Heart right ventricle (tissue), 16 donors: ENCODE measurements at regions of chr12 and their contacts with region 1.

Region 1: GRCh38 chr12:108803428-108804105 is 53.8 kb downstream of the SSH1 start:
- DNase-seq: peak in 1 of 2 donors; percentile 91
- ATAC-seq: peak; percentile 53 to 86 (median 76)
- H3K4me3 ChIP-seq: peak overlapping the region in 3 of 10 donors; percentile 23 to 37 (median 24)
- H3K27ac ChIP-seq: peak overlapping the region; percentile 79 to 91 (median 87)
- H3K4me1 ChIP-seq: peaks cover 20 to 85% (median 61%) of the 10 kb centered on the region in 9 donors
- H3K27me3 ChIP-seq: no peaks in the 10 kb centered on the region
- CTCF ChIP-seq: peak; percentile 92 to 98 (median 96)

Region 2: DNA sequence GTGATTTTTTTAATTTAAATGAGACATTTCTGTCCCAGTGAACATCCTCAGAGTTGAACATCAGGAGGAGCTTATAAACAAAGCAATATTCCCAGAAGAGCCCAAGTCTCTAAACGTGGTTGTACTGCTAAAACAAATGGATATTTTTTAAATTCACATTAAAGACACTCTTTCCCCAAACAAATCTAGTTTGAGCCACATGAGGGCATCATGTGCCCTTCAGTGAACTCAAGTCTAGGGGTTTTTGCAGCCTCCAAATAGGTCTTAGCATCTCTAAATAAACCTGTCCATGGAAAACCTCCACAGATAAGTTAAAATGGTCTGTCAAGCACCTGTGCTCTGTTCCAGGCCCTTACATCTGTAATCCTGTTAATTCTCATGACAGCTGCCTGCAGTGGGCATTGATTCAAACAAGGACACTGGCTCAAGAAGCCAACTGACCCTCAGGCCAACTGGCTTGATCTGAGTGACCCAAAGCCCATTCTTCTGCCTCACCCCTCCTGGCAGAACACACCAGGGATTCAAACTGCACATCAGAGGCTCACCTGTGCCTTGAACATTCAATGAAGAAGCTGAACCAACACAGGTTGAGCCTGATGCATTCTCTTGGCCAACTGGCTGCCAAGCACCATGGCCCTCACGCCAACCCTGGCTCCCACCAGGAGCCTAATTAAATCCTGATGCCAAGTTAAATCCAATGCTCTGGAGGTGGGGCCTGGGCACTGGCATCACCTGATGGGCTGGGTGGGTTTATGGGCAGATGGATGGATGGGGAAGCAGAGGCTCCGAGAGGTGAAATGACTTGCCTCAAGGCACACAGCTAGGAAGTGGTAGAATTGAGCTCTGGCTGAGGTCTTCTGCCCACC is 232.6 kb before region 1 on chr12:
- intact Hi-C with region 1: loop called in 3 of 10 experiments (anchors 5 to 10 kb)
- DNase-seq: no peak
- ATAC-seq: peak in 2 of 8 donors; percentile 12 to 27
- H3K4me3 ChIP-seq: no peak overlapping the region
- H3K27ac ChIP-seq: peak overlapping the region in 1 of 10 donors; percentile 15
- H3K4me1 ChIP-seq: peaks cover 0 to 30% (median 6%) of the 10 kb centered on the region in 9 donors
- H3K27me3 ChIP-seq: no peaks in the 10 kb centered on the region
- CTCF ChIP-seq: peak in 8 of 9 donors; percentile 6 to 52 (median 40)

Region 3: GRCh38 chr12:108691175-108691997 is 112.2 kb before region 1 on chr12:
- intact Hi-C with region 1: loop called in 3 of 10 experiments (anchors 1 to 5 kb)
- DNase-seq: peak; percentile 89 to 96
- ATAC-seq: peak; percentile 93 to 96 (median 94)
- H3K4me3 ChIP-seq: peak overlapping the region in 8 of 10 donors; percentile 0 to 44 (median 26)
- H3K27ac ChIP-seq: peak overlapping the region; percentile 89 to 98 (median 94)
- H3K4me1 ChIP-seq: peaks cover 31 to 95% (median 81%) of the 10 kb centered on the region in 9 donors
- H3K27me3 ChIP-seq: no peaks in the 10 kb centered on the region
- CTCF ChIP-seq: peak; percentile 15 to 57 (median 40)

Region 4: GRCh38 chr12:108738170-108738569 is 65.4 kb before region 1 on chr12:
- intact Hi-C with region 1: loop called in 5 of 10 experiments (anchors 2 to 5 kb)
- DNase-seq: no peak
- ATAC-seq: no peak
- H3K4me3 ChIP-seq: no peak overlapping the region
- H3K27ac ChIP-seq: no peak overlapping the region
- H3K4me1 ChIP-seq: peaks cover 0 to 15% (median 0%) of the 10 kb centered on the region in 9 donors
- H3K27me3 ChIP-seq: no peaks in the 10 kb centered on the region
- CTCF ChIP-seq: no peak

Region 5: DNA sequence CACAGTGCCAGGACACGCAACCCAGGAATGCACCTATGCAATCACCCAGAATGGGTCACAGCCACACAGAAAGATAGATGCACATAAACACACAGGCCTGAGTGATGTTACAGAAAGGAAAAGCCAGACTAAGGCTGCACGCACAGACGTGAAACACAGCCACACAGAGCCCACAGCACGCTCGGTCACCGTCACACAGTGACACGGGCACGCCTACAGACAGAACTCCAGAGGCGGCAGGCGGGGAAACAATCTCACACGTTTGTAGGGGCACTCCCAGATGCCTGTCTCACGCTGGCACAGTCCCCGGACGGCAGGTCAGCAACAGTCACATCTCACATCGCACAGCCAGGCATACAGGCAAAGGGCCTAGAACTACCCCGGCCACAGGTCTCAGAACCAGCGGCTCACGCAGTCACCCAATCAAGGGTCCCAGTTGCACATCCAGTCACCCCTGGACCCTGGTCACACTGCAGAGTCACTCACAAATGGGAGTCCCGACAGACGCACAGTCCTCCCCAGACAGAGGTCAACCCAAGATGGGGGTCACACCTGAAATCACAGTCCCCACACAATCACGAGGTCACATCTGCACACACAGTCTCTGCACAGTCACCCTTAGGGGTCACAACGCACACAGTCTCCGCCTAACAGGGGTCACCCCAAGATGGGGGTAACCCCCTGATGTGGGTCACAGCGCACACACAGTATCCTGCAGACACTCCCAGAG is 53.0 kb after region 1 on chr12:
- intact Hi-C with region 1: loop called in 9 of 10 experiments (anchors 1 to 10 kb)
- DNase-seq: peak; percentile 79 to 84
- ATAC-seq: peak; percentile 8 to 70 (median 52)
- H3K4me3 ChIP-seq: peak overlapping the region; percentile 51 to 92 (median 83)
- H3K27ac ChIP-seq: peak overlapping the region; percentile 76 to 98 (median 97)
- H3K4me1 ChIP-seq: peaks cover 38 to 81% (median 66%) of the 10 kb centered on the region in 9 donors
- H3K27me3 ChIP-seq: no peaks in the 10 kb centered on the region
- CTCF ChIP-seq: no peak

Region 6: GRCh38 chr12:109052414-109053323 is 249.1 kb after region 1 on chr12 and contains the start of gene USP30:
- intact Hi-C with region 1: loop called in 1 of 10 experiments (anchors 2 kb)
- DNase-seq: peak; percentile 84 to 85
- ATAC-seq: peak; percentile 94 to 97 (median 96)
- H3K4me3 ChIP-seq: peak within 1 kb of the TSS; percentile 63 to 100 (median 92)
- H3K27ac ChIP-seq: peak within 1 kb of the TSS; percentile 66 to 96 (median 89)
- H3K4me1 ChIP-seq: peaks cover 2 to 24% (median 17%) of the 10 kb centered on the region in 9 donors
- H3K27me3 ChIP-seq: no peaks in the 10 kb centered on the region
- CTCF ChIP-seq: peak in 1 of 9 donors; percentile 10
- total RNA-seq, gene USP30: 8.8 to 22.2 (median 13.1) TPM

Region 7: DNA sequence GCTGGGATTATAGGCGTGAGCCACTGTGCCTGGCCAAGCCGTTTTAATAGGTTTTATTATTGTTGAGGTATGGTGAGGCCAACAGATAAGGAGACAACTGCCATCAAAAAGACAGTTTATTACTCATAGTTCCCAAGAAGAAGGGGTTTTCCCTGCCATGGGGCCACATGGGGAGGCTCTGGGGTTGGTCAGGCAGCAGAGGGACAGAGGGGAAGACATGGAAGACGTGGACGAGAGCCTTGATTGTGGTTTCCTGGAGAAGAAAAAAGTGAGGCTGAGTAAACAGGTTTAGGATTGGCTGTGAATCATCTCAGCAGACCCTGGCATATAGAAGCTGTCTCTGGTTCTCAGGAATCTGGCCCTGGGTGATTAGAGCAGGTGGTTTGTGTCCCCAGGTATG is 435.6 kb after region 1 on chr12:
- intact Hi-C with region 1: no loop called
- DNase-seq: no peak
- ATAC-seq: no peak
- H3K4me3 ChIP-seq: no peak overlapping the region
- H3K27ac ChIP-seq: no peak overlapping the region
- H3K4me1 ChIP-seq: no peaks in the 10 kb centered on the region
- H3K27me3 ChIP-seq: no peaks in the 10 kb centered on the region
- CTCF ChIP-seq: no peak